Aorta (tissue), 5 donors: ENCODE measurements at regions of chr9 and their contacts with region 1.

Region 1: DNA sequence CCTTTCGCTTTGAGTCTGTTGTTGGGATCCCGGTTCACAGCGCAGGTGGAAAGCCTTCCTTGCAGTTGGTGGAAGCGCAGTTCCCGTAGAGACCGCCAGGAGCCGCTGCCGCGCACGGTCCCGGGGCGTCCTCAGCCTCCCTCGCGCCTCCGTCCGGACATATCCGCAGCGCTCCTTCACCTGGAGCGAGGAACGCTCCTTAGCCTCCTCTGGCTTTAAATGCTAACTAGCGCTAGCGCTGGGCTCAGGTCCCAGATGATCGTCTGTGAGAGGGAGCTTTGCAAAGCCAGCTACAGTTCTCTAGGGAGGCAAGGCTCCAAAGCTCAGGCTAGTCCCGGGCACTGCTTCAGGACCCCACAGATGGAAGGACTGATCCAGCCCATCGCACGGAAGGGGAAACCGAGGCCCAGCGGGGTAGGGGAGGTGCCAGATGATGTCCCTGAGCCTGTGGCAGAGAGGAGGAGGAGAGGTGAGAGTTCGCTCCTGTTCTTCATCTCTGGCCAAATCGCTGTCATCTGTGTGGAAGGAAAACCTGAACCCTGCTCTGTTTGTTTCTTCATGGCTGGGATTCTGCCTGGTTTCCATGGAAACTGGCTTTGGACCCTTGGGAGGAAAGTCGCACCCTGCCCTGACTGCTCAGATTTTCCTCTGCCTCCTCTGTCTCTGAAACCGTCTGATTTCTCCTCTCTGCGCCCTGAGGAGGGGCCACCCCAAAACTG is 31.4 kb downstream of the COL15A1 start:
- DNase-seq: peak; percentile 86 to 96
- ATAC-seq: peak; percentile 91
- H3K4me3 ChIP-seq: no peak overlapping the region
- H3K27ac ChIP-seq: peak overlapping the region in 1 of 2 donors; percentile 4
- H3K4me1 ChIP-seq: no peaks in the 10 kb centered on the region
- H3K27me3 ChIP-seq: no peaks in the 10 kb centered on the region

Region 2: DNA sequence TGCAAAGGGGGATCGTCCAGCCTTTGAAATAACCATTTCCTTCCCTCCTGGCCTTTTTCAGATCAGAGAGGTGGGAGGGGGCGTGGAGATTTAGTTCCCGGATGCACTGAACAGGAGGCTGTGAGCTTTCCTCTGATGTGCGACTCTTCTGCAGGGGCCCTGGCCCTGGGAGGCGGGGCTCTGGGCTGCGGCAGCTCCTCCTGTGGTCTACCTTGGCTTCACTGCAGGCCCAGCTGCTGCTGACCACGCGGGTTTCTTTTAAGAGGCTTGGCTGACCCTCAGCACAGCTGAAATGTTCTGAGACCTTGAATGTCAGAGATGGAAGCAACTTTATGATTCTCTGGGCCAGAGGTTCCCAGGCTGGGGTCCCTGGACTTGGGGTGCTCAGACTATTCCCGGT is 58.5 kb before region 1 on chr9:
- intact Hi-C with region 1: no loop called
- DNase-seq: peak in 1 of 2 donors; percentile 56
- ATAC-seq: peak; percentile 14
- H3K4me3 ChIP-seq: no peak overlapping the region
- H3K27ac ChIP-seq: no peak overlapping the region
- H3K4me1 ChIP-seq: no peaks in the 10 kb centered on the region
- H3K27me3 ChIP-seq: no peaks in the 10 kb centered on the region

Region 3: GRCh38 chr9:98989036-98990000 is 14.2 kb after region 1 on chr9:
- intact Hi-C with region 1: no loop called
- DNase-seq: peak; percentile 91 to 93
- ATAC-seq: peak; percentile 91
- H3K4me3 ChIP-seq: no peak overlapping the region
- H3K27ac ChIP-seq: peak overlapping the region; percentile 24 to 93
- H3K4me1 ChIP-seq: peaks cover 0 to 2% of the 10 kb centered on the region in 2 donors
- H3K27me3 ChIP-seq: no peaks in the 10 kb centered on the region

Region 4: DNA sequence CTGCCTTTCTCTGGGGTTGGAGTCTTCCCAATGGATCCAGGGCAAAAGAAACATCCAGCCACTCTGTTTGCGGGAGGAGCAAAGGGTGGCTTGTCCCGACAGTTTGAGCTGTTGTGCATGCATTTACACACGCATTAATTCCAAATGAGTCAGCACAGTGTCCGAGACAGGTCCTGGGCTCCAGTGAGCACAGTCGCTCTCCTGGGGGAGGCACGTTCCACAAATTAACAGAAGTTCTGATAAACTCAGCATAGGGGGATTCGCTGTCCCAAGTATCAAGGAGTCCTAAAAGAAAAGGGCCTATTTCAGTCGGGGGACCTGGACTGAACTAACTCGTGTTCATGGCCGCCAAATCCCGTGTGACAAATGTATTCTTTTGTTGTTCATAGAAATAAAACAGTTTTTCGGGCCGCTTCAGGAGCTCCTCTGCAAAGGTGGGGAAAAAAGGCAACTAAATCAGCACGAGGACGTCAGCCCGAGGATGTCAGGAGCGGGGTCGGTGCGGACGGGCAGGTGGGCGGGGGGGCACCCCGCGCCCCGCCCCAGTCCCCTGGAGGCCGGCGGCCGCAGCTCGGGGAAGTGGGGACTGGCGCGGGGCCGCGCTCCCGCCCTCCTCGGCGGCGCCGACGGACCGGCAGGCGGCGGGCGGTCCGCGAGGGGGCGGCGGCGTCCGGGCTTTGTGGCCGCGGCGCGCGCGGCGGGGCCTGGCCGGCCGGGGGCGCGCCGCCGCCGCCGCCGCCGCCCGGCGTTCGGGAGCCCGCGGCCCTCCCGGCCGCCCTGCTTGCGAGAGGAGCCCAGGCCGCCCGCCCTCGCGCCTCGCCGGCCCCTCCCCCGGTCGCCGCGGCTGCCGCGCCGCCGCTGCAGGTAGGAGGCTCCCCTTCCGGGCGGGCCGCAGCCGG is 1451.6 kb after region 1 on chr9 and contains the start of gene MSANTD3:
- intact Hi-C with region 1: loop called in 1 of 2 experiments (anchors 10 kb)
- DNase-seq: peak; percentile 66 to 86
- ATAC-seq: peak; percentile 86
- H3K4me3 ChIP-seq: peak within 1 kb of the TSS; percentile 76 to 98
- H3K27ac ChIP-seq: peak within 1 kb of the TSS; percentile 95 to 97
- H3K4me1 ChIP-seq: peaks cover 0 to 3% of the 10 kb centered on the region in 2 donors
- H3K27me3 ChIP-seq: no peaks in the 10 kb centered on the region
- total RNA-seq, gene MSANTD3: 26.6 to 31.0 TPM